ENCODE measurements at regions of chr16 and their contacts with region 1.

Region 1: GRCh38 chr16:30534368-30535105 is at the start of gene ZNF747:
- DNase-seq: peak; percentile 89 to 93
- H3K4me3 ChIP-seq: peak within 1 kb of the TSS; percentile 80
- H3K4me3 Mint-ChIP-seq: peak within 1 kb of the TSS; percentile 87
- H3K27ac Mint-ChIP-seq: peak within 1 kb of the TSS; percentile 91
- H3K4me1 ChIP-seq: no peaks in the 10 kb centered on the region; the same call in 1 of the 2 replicates
- H3K4me1 Mint-ChIP-seq: no peaks in the 10 kb centered on the region
- H3K27me3 ChIP-seq: no peaks in the 10 kb centered on the region
- H3K27me3 Mint-ChIP-seq: no peaks in the 10 kb centered on the region
- CTCF ChIP-seq: no peak
- total RNA-seq, gene ZNF747: 6.9 and 8.1 TPM in 2 replicates

Region 2: DNA sequence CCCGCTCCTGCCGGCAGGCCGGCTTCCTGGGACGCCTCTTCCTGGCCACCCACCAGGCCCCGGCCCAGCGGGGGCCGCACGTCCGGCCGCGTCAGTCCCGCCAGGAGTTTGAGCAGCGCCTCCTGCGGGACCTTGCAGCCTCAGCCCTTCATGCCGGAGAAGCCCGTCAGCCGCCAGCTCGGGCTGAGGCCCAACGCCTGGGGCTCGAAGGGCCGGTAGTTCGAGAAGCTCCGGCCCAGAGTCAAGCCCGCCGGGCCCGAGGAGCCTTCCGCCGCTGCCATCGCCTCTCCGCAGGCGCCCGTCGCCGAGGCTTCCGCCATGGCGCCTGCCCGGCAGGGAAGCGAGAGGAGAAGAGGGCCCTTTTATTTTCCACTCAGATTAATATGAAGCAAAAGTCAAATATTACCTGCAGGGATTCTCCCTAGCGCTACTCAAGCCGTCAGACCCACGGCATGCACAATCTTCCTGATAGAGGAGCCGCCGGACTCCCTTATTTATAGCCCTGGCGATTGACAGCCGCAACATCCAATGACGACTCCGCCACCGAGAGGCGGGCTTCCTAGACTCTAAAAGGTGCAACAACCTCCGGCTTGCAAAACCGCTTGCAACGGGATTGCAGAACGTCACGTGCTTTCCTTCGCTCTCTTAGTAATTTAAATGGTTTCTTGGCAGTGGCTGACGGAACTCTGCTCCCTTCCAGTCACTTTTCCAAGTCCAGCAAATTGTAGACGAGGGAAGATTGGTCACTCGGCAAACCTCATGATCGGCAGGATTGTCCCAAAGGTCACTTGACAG is 88.9 kb before region 1 on chr16 and contains the start of gene SEPHS2:
- CTCF ChIA-PET with region 1: no interaction called
- POLR2A ChIA-PET with region 1: interaction called, 5 read pairs
- intact Hi-C with region 1: loop called (anchors 2 kb)
- DNase-seq: peak; percentile 96 to 98
- H3K4me3 ChIP-seq: peak within 1 kb of the TSS; percentile 80
- H3K4me3 Mint-ChIP-seq: peak within 1 kb of the TSS; percentile 87
- H3K27ac Mint-ChIP-seq: peak within 1 kb of the TSS; percentile 98
- H3K4me1 ChIP-seq: peaks cover 29% of the 10 kb centered on the region
- H3K4me1 Mint-ChIP-seq: peaks cover 13% of the 10 kb centered on the region
- H3K27me3 ChIP-seq: no peaks in the 10 kb centered on the region
- H3K27me3 Mint-ChIP-seq: no peaks in the 10 kb centered on the region
- CTCF ChIP-seq: no peak
- total RNA-seq, gene SEPHS2: 80.2 and 91.6 TPM in 2 replicates

Region 3: DNA sequence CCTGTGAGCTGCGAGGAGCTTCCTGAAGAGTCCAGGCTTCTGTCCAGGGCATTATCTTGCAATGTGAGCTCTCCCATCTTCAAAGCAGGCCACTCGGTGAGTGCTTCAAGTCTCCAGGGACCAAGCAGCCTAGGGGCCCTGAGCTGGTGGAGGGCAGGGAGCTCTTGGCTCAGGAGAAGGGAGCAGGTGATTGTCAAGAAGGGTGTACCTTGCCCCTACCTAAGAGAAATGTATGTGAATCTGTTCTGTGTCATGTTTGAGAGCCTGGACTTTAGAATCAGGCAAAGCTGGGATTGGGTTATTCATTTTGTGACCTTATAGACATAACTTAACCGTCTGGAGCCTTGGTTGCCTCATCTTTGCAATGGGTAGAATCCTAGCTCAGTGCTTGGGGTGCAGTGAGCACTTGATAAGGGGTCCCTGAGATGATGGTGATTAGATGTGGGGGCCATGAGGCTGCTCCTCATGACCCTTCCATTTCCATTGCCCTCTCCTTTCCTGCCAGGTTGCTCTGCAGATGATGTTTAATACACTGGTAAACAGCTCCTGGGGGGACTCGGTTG is 24.1 kb before region 1 on chr16:
- CTCF ChIA-PET with region 1: no interaction called
- POLR2A ChIA-PET with region 1: no interaction called
- intact Hi-C with region 1: no loop called
- DNase-seq: no peak
- H3K4me3 ChIP-seq: no peak overlapping the region
- H3K4me3 Mint-ChIP-seq: no peak overlapping the region
- H3K27ac Mint-ChIP-seq: no peak overlapping the region
- H3K4me1 ChIP-seq: no peaks in the 10 kb centered on the region
- H3K4me1 Mint-ChIP-seq: no peaks in the 10 kb centered on the region
- H3K27me3 ChIP-seq: no peaks in the 10 kb centered on the region
- H3K27me3 Mint-ChIP-seq: no peaks in the 10 kb centered on the region
- CTCF ChIP-seq: no peak

Region 4: GRCh38 chr16:30571695-30572600 is 37.4 kb after region 1 on chr16 and contains the start of gene ZNF688:
- CTCF ChIA-PET with region 1: interaction called, 14 read pairs
- POLR2A ChIA-PET with region 1: interaction called, 9 read pairs
- intact Hi-C with region 1: loop called (anchors 1 kb)
- DNase-seq: peak; percentile 94 to 97
- H3K4me3 ChIP-seq: peak within 1 kb of the TSS; percentile 77
- H3K4me3 Mint-ChIP-seq: peak within 1 kb of the TSS; percentile 82
- H3K27ac Mint-ChIP-seq: peak within 1 kb of the TSS; percentile 93
- H3K4me1 ChIP-seq: no peaks in the 10 kb centered on the region
- H3K4me1 Mint-ChIP-seq: peaks cover 7% of the 10 kb centered on the region
- H3K27me3 ChIP-seq: no peaks in the 10 kb centered on the region
- H3K27me3 Mint-ChIP-seq: no peaks in the 10 kb centered on the region
- CTCF ChIP-seq: no peak
- total RNA-seq, gene ZNF688: 6.2 and 10.0 TPM in 2 replicates

Region 5: DNA sequence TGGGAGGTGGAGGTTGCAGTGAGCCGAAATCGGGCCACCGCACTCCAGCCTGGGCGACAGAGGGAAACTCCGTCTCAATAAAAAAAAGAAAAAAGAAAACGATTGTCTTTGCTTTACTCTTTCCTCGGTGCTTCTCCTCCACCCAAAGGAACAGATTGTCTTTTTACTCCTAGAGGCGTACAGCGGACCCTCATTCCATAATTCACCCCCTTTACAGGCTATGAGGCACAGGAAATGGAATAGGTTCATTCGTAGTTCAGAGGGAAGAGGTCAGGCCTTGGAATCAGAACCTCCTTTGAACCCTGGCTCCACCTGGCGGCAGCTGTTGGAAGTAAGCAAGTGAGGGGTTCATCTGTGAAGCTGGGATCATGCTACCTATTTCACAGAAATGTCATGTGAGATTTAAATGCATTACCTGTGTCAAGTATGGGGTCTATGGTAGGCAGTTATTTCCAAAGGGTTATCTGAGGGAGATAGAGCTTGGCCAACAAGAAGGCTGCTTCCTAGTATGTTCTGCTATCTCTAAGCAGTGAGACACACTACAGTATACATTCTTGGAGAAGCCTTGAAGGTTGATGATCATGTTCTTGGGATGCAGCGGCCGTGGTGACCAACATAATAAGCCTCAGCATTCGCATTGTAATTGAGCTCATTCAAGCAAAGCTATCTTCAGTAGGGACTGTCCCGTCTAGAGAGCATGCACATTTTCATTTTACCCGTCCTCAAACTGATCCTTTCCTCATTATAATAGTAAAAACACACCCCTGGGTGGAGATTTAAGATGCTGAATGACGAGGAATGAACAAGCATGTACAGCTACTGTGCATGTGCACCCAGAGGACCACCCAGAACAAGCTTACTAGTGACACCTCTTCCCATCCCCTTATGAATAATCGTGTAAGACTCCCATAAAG is 94.3 kb after region 1 on chr16:
- CTCF ChIA-PET with region 1: no interaction called
- POLR2A ChIA-PET with region 1: interaction called, 5 read pairs
- intact Hi-C with region 1: loop called (anchors 2 kb)
- DNase-seq: peak; percentile 81 to 87
- H3K4me3 ChIP-seq: no peak overlapping the region
- H3K4me3 Mint-ChIP-seq: no peak overlapping the region
- H3K27ac Mint-ChIP-seq: no peak overlapping the region
- H3K4me1 ChIP-seq: no peaks in the 10 kb centered on the region
- H3K4me1 Mint-ChIP-seq: no peaks in the 10 kb centered on the region
- H3K27me3 ChIP-seq: no peaks in the 10 kb centered on the region
- H3K27me3 Mint-ChIP-seq: no peaks in the 10 kb centered on the region
- CTCF ChIP-seq: peak; percentile 76 to 90

Region 6: DNA sequence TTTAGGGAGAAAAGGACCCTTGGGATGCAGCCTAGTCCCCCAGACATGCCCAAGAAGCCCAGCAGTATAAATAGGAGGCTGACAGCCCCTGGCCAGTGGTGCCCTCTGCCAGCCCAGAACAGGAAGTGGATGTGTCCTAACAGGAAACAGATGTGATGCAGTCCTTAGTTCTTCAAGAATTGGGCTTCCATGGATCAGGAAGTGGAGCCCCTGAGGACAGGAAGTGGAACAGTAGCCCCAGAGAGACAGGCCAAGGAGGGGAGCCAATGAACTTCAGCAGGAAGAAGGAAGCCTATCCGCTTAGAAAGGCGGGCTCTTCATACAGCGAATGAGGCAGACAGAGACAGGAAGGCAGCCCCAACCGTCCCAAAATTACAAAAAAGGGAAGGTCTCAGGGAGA is 369.1 kb after region 1 on chr16:
- CTCF ChIA-PET with region 1: no interaction called
- POLR2A ChIA-PET with region 1: no interaction called
- intact Hi-C with region 1: no loop called
- DNase-seq: no peak
- H3K4me3 ChIP-seq: no peak overlapping the region
- H3K4me3 Mint-ChIP-seq: peak overlapping the region; percentile 79
- H3K27ac Mint-ChIP-seq: no peak overlapping the region
- H3K4me1 ChIP-seq: no peaks in the 10 kb centered on the region
- H3K4me1 Mint-ChIP-seq: peaks cover 9% of the 10 kb centered on the region
- H3K27me3 ChIP-seq: no peaks in the 10 kb centered on the region
- H3K27me3 Mint-ChIP-seq: no peaks in the 10 kb centered on the region
- CTCF ChIP-seq: no peak

Measured in Caco-2 (cell line).